HEK293 (cell line): ENCODE measurements at regions of chr17 and their contacts with region 1.

Region 1: DNA sequence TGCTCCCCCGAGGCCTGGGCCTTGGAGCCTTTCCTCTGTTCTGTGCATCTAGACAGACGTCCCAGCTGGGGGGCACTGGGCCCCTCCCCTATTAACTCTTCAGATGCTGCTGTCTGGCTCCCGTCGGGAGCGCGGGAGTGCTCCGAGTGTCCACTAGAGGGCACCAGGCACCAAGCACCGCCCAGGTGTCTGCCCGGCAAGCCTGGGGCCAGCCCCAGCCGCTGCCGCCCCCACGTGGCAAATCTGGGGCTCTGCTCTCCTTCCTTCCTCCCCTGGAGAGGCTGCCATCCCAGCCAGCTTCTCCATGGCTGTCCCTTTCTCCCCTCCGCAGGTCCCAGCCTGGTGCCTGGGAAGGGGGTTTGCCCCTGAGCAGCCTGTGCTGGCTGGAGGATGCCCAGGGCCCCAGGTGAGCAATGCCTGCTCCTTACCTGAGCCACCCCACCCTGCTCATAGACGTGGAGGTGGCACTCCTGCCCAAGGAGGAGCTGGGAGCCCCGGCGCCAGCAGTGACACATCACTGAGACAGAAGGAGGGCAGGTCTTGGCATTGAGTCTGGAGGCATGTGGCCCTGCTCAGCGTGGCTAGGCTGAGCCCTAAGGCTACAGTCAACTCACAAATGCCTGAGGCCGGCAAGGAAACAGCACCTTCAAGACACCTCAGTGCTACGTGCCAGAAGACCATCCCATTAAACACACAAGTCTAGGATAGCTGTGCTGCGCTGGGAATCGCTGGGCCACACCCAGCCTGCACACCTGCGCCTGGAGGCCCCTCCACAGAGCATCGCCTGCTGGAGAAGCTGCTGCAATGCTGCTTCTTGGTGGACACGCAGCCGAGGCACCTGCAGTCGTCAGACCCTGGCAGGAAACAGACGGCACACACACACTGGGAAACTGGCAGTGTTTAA is 19.7 kb downstream of the TMEM235 start:
- H3K4me3 ChIP-seq: no peak overlapping the region
- H3K27ac ChIP-seq: no peak overlapping the region
- H3K4me1 ChIP-seq: no peaks in the 10 kb centered on the region
- CTCF ChIP-seq: peak; percentile 99

Region 2: GRCh38 chr17:78092794-78093324 is 158.3 kb before region 1 on chr17:
- CTCF ChIA-PET with region 1: interaction called, 14 read pairs
- POLR2A ChIA-PET with region 1: no interaction called
- H3K4me3 ChIP-seq: no peak overlapping the region
- H3K27ac ChIP-seq: no peak overlapping the region
- H3K4me1 ChIP-seq: no peaks in the 10 kb centered on the region
- CTCF ChIP-seq: no peak

Region 3: GRCh38 chr17:78128551-78129350 is 122.4 kb before region 1 on chr17 and contains the start of gene TMC6:
- CTCF ChIA-PET with region 1: no interaction called
- POLR2A ChIA-PET with region 1: no interaction called
- H3K4me3 ChIP-seq: peak within 1 kb of the TSS; percentile 62
- H3K27ac ChIP-seq: peak within 1 kb of the TSS; percentile 37; the same call in 1 of the 2 replicates
- H3K4me1 ChIP-seq: peaks cover 6% of the 10 kb centered on the region; the same call in 1 of the 2 replicates
- CTCF ChIP-seq: no peak

Region 4: DNA sequence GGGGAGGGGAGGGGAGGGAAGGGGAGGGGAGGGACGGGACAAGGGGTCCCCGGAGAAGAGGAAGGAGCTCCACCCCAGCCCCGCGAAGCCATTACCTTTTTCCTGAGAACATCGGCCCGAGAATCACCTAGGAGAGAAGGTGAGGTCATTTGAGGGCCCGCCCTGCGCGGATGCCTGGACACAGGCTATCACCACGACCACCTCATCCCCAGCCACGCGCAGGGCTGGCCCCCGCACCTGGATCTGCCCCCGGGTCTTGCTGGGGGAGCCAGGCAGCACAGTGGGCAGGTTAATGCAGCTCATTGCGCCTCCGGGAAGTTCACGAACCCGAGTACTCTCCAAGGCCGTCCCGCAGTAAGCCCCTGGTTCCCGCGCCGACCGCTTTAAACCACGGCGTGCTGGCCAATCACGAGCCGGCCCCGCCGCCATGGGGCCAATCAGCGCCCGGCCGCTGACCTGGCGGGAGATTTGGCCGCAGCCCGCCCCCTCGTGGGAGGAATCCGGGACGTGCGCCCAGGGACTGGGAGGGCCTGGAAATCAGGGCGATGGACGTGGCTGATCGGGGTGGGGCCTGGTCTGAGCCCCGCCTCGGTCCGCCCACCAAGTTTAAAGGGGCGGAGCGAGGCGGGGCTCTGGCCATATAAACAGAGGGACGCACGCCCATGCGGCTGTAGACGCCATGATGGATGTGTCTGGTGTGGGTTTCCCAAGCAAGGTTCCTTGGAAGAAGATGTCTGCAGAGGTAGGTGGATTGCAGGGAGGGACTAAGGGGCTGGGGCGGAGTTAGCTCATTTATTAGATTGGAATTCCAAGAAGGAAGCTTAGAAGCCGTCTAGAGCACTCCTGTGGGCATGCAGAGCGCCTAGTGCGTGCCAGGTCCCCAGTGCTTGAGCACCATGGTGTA is 64.2 kb before region 1 on chr17 and contains the starts of genes AFMID and TK1:
- CTCF ChIA-PET with region 1: interaction called, 16 read pairs
- POLR2A ChIA-PET with region 1: interaction called, 6 read pairs
- H3K4me3 ChIP-seq: peak within 1 kb of the TSS; percentile 53
- H3K27ac ChIP-seq: peak within 1 kb of the TSS; percentile 72
- H3K4me1 ChIP-seq: peaks cover 2% of the 10 kb centered on the region
- CTCF ChIP-seq: peak; percentile 99

Region 5: DNA sequence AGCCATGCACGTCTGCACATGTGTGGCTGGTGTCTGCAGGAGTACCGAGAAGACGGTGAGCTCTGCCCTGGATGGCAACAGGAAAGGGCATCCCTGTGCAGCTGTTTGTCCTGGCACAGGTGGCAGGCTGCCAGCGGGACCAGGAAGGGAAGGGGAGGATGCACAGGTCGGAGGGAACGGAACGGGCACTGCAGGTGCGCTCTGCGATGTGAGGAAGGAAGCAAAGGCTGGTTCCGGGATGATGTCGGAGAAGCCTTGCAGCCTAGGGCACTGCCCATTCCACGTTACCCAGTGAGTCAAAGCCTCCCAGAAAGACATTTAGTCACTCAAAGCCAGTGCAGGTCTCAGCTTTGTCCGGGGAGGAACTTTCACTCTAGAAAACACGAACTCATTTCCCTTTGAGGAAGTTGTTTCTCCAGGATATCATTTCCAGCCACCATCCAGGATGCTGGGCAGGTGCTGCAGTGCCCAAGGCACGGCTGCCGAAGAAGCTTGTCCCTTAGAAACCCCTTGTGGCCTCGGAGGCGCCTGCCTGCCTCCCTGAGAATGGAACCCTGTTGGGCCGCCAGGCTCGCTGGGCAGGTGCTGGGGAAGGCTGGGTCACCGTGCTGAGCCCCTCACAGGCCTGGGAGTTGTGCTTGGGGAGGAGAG is 24.3 kb before region 1 on chr17:
- CTCF ChIA-PET with region 1: interaction called, 15 read pairs
- POLR2A ChIA-PET with region 1: interaction called, 4 read pairs
- H3K4me3 ChIP-seq: no peak overlapping the region
- H3K27ac ChIP-seq: no peak overlapping the region
- H3K4me1 ChIP-seq: no peaks in the 10 kb centered on the region
- CTCF ChIP-seq: no peak

Region 6: GRCh38 chr17:78341559-78342448 is 90.7 kb after region 1 on chr17:
- CTCF ChIA-PET with region 1: no interaction called
- POLR2A ChIA-PET with region 1: no interaction called
- H3K4me3 ChIP-seq: peak overlapping the region; percentile 14
- H3K27ac ChIP-seq: no peak overlapping the region; the same call in 1 of the 2 replicates
- H3K4me1 ChIP-seq: peaks cover 6% of the 10 kb centered on the region; the same call in 1 of the 2 replicates
- CTCF ChIP-seq: no peak

Region 7: GRCh38 chr17:78360371-78361224 is 109.5 kb after region 1 on chr17:
- CTCF ChIA-PET with region 1: interaction called, 10 read pairs
- POLR2A ChIA-PET with region 1: interaction called, 4 read pairs
- H3K4me3 ChIP-seq: peak overlapping the region; percentile 76
- H3K27ac ChIP-seq: peak overlapping the region; percentile 67; the same call in 1 of the 2 replicates
- H3K4me1 ChIP-seq: peaks cover 7% of the 10 kb centered on the region
- CTCF ChIP-seq: peak; percentile 96